ENCODE measurements at regions of chr4 and their contacts with region 1.

Region 1: DNA sequence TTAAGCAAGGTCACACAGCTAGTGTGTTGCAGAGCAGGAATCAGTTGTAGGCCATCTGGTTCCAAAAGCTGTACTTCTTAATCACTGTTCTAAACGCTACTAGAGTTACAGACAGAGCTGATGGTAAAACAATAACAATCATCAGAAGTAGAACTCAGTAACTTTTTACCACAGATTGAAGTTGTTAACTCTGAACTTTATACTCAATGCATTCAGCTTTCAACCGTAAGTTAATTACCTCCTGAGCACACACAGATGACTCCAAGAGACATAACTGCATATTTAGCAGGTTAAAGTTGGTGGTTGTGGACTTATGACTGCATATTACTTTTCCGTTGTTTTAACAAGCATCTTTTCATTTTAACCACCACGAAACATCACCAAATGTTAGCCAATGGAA is 127.3 kb downstream of the PRSS12 start:
- ATAC-seq: no peak
- H3K4me3 ChIP-seq: no peak overlapping the region
- H3K27ac ChIP-seq: no peak overlapping the region
- H3K4me1 ChIP-seq: peaks cover 0 to 3% of the 10 kb centered on the region in 2 donors

Region 2: GRCh38 chr4:117817301-117817700 is 408.2 kb before region 1 on chr4:
- in situ Hi-C with region 1: loop called in 1 of 9 experiments (anchors 25 kb)
- ATAC-seq: peak in 1 of 8 experiments; percentile 37
- H3K4me3 ChIP-seq: no peak overlapping the region
- H3K27ac ChIP-seq: no peak overlapping the region
- H3K4me1 ChIP-seq: peaks cover 15 to 18% of the 10 kb centered on the region in 2 donors

Region 3: DNA sequence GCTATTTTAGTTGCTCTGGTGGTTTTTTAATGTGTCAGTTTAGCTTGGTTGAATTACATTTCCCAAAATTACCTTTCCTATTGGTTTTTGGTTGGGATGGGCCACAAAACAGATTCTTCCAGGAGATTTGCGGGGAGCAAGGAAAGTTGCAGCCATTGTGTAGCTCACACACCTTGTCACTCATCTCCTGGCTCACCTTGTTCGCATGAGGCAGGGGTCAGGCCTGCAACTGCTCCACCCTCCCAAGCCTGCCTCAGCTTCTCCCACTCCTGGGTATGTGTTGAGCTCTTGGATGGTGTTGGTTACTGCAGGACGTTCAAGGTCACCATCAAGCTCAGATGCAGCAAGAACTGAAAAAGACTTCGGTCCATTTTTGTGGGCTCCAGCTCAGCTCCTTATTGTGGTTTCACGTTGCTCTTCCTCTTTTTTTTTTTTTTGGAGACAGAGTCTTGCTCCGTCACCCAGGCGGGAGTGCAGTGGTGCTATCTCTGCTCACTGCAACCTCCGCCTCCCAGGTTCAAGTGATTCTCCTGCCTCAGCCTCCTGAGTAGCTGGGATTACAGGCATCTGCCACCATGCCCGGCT is 364.1 kb after region 1 on chr4:
- in situ Hi-C with region 1: no loop called
- ATAC-seq: no peak
- H3K4me3 ChIP-seq: no peak overlapping the region
- H3K27ac ChIP-seq: no peak overlapping the region
- H3K4me1 ChIP-seq: peaks cover 13 to 16% of the 10 kb centered on the region in 2 donors